PC-9 (cell line): ENCODE measurements at regions of chr16 and their contacts with region 1.

Region 1: DNA sequence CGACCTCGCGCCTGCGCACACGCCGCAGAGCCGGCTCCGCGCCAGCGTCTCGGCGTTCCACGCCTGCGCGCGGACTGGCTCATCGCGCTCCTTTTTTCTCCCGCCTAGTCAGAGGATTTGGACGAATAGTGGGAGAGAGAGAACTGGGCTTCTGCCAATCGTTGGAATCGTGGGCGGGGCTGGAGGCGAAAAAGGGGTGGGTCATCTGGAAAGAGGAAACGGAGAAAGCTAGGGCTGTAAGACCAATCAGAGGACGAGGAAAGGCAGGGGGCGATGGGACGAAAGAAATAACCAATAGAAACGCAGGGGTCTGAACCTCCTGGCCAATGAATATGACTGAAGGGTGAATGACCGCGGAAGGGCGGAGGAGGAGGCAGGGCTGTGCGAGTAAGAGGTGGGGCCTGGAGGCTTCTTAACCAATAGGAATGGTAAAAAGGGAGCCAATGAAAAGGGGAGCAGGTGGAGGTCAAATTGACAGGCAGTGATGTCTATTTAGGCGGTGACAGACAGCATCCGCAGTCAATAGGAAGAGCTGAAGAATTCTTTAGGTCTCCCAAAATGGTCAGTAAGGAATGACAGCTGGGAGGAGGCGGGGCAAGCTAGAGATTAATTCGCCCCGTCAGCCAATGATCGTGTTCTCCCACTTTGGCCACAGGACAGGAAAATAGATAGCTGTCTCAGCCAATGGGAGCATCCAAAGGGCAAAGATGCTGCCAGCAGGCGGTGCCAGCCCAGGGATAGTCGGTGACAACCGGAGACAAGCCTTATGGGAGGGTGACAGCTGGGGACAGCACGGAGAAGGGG is at the start of gene TBC1D10B:
- DNase-seq: peak; percentile 100
- H3K4me3 ChIP-seq: peak within 1 kb of the TSS; percentile 75
- H3K27ac ChIP-seq: no peak within 1 kb of the TSS
- H3K4me1 ChIP-seq: peaks cover 22% of the 10 kb centered on the region
- H3K27me3 ChIP-seq: no peaks in the 10 kb centered on the region
- CTCF ChIP-seq: no peak; the same call in 1 of the 2 replicates
- total RNA-seq, gene TBC1D10B: 85.0 and 90.8 TPM in 2 replicates

Region 2: DNA sequence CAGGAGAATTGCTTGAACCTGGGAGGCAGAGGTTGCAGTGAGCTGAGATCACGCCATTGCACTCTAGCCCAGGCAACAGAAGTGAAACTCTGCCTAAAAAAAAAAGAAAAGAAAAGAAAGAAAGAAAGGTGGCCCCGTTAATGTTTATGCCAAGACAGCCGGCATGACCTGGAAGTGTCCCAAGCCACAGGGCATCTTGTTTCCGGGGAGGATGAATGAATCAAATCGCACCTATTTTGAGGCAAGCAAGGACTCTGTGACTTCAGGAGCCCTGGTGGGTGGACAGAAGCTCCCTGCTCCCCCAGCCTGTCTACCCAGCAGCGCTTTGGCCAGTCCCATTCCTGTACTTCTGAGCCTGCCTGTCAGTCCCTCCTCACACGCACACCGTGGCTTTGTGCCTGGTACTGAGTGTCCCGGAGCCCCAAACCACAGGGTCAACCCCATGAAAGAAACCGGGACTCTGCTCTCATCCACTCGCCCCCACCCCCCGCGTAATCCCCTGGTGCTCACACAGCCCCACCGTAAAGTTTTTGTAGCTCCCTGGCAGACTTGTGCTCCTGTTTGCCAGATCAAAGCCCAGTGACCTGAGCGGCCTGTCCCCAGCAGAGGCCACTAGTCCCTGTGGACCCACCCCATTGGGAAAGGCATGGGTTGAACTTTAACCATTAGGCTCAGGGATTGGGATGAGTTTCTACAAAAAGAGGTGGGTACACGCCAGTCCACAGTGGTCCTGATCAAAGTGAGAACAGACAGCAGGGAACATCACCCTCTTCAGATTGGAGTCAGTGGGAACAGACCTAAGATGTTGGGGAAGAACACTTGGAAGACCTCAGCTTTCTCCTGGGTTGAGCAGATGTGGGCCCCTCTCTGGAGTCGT is 34.8 kb before region 1 on chr16:
- CTCF ChIA-PET with region 1: no interaction called
- POLR2A ChIA-PET with region 1: interaction called, 44 read pairs
- intact Hi-C with region 1: loop called (anchors 2 kb)
- DNase-seq: peak in 1 of 2 experiments; percentile 66
- H3K4me3 ChIP-seq: peak overlapping the region; percentile 59
- H3K27ac ChIP-seq: peak overlapping the region; percentile 76
- H3K4me1 ChIP-seq: peaks cover 13% of the 10 kb centered on the region
- H3K27me3 ChIP-seq: no peaks in the 10 kb centered on the region
- CTCF ChIP-seq: no peak

Region 3: GRCh38 chr16:30382111-30382881 is 11.7 kb after region 1 on chr16 and contains the start of gene SEPTIN1:
- CTCF ChIA-PET with region 1: no interaction called
- POLR2A ChIA-PET with region 1: no interaction called
- intact Hi-C with region 1: no loop called
- DNase-seq: no peak
- H3K4me3 ChIP-seq: no peak within 1 kb of the TSS
- H3K27ac ChIP-seq: no peak within 1 kb of the TSS
- H3K4me1 ChIP-seq: peaks cover 9% of the 10 kb centered on the region; the same call in 1 of the 2 replicates
- H3K27me3 ChIP-seq: no peaks in the 10 kb centered on the region
- CTCF ChIP-seq: no peak
- total RNA-seq, gene SEPTIN1: 6.7 and 7.6 TPM in 2 replicates

Region 4: DNA sequence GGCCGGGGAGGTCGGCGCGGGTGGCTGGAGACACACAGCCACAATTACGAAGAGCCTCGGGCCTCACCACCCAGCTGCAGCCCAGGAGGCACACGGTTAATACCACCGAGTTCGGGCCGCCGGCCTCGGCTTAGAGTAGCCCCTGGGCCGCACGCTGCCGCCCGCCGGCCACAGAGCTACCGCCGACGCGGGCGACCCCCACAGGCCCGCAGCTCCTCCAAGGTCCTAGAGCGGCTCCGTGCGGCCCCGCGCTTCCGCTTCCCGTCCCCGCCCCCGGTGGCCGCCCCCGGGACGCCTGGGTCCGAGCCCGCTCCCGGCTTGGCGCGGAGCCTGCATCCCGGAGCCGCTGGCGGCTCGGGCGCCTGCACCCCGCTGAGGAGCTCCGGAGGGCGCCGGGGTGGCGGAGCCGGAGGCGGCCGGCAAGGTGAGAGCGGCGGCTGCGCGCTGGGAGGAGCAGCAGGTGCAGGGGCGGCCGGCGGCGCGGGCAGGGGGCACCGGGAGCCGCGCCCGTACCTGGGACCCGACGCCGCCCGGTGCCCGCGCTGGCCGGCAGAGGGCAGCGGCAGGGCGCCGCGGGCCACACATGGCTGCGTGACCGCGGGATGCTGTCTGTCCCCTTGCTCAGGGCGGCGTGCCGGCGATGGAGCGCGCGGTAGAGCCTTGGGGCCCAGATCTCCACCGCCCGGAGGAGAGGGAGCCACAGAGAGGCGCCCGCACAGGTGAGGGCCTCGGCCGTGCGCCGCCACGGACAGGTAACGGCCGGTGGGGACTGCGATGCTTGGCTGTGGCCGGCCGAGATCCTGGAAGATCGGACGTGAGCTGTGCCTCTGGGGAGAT is 24.7 kb after region 1 on chr16 and contains the start of gene ZNF48:
- CTCF ChIA-PET with region 1: interaction called, 3 read pairs
- POLR2A ChIA-PET with region 1: interaction called, 14 read pairs
- intact Hi-C with region 1: no loop called
- DNase-seq: peak; percentile 72 to 93
- H3K4me3 ChIP-seq: peak within 1 kb of the TSS; percentile 98
- H3K27ac ChIP-seq: peak within 1 kb of the TSS; percentile 68
- H3K4me1 ChIP-seq: peaks cover 19% of the 10 kb centered on the region
- H3K27me3 ChIP-seq: no peaks in the 10 kb centered on the region
- CTCF ChIP-seq: no peak; the same call in 1 of the 2 replicates
- total RNA-seq, gene ZNF48: 20.1 and 25.9 TPM in 2 replicates